CD4-positive, alpha-beta memory T cell (primary cell): ENCODE measurements at regions of chr7 and their contacts with region 1.

Region 1: GRCh38 chr7:3897438-3898385 is 596.7 kb downstream of the SDK1 start:
- DNase-seq: peak in 4 of 5 donors; percentile 32 to 49 (median 42)
- H3K4me3 ChIP-seq: no peak overlapping the region
- H3K4me3 Mint-ChIP-seq: no peak overlapping the region
- H3K27ac ChIP-seq: no peak overlapping the region
- H3K27ac Mint-ChIP-seq: no peak overlapping the region
- H3K4me1 ChIP-seq: no peaks in the 10 kb centered on the region
- H3K4me1 Mint-ChIP-seq: no peaks in the 10 kb centered on the region
- H3K27me3 ChIP-seq: no peaks in the 10 kb centered on the region
- H3K27me3 Mint-ChIP-seq: peaks cover 2 to 4% of the 10 kb centered on the region in 2 donors

Region 2: GRCh38 chr7:3393862-3394261 is 503.9 kb before region 1 on chr7:
- CTCF ChIA-PET with region 1: no interaction called
- POLR2A ChIA-PET with region 1: no interaction called
- intact Hi-C with region 1: loop called (anchors 5 kb)
- DNase-seq: no peak
- H3K4me3 ChIP-seq: no peak overlapping the region
- H3K4me3 Mint-ChIP-seq: no peak overlapping the region
- H3K27ac ChIP-seq: no peak overlapping the region
- H3K27ac Mint-ChIP-seq: no peak overlapping the region
- H3K4me1 ChIP-seq: no peaks in the 10 kb centered on the region
- H3K4me1 Mint-ChIP-seq: no peaks in the 10 kb centered on the region
- H3K27me3 ChIP-seq: no peaks in the 10 kb centered on the region
- H3K27me3 Mint-ChIP-seq: peaks cover 12 to 13% of the 10 kb centered on the region in 2 donors